Aorta (tissue), 5 donors: ENCODE measurements at regions of chr13 and their contacts with region 1.

Region 1: DNA sequence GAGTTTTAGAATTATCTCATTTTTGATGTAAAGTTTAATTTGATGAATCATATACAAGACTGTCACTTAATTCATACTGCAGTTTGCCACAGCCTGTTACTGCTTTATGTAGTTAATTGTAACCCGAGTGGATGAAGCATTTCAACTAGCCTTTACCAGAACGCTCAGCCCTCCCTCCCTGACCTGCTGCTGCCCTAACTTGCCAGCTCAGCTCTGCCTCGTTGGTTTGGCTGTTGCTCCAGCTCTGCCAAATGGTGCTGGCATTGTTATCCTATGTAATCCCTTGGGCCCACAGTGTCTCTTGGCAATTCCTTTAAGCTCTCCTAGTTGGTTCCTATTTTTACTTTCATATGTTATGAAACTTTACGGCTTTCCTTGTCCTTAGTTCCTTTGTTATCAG is 113.3 kb downstream of the LMO7 start:
- DNase-seq: peak; percentile 80 to 82
- ATAC-seq: peak; percentile 81
- H3K4me3 ChIP-seq: no peak overlapping the region
- H3K27ac ChIP-seq: peak overlapping the region in 1 of 2 donors; percentile 14
- H3K4me1 ChIP-seq: peaks cover 0 to 2% of the 10 kb centered on the region in 2 donors
- H3K27me3 ChIP-seq: no peaks in the 10 kb centered on the region

Region 2: GRCh38 chr13:75258159-75258782 is 491.1 kb before region 1 on chr13:
- intact Hi-C with region 1: no loop called
- DNase-seq: no peak
- ATAC-seq: peak; percentile 57
- H3K4me3 ChIP-seq: no peak overlapping the region
- H3K27ac ChIP-seq: no peak overlapping the region
- H3K4me1 ChIP-seq: no peaks in the 10 kb centered on the region
- H3K27me3 ChIP-seq: no peaks in the 10 kb centered on the region

Region 3: DNA sequence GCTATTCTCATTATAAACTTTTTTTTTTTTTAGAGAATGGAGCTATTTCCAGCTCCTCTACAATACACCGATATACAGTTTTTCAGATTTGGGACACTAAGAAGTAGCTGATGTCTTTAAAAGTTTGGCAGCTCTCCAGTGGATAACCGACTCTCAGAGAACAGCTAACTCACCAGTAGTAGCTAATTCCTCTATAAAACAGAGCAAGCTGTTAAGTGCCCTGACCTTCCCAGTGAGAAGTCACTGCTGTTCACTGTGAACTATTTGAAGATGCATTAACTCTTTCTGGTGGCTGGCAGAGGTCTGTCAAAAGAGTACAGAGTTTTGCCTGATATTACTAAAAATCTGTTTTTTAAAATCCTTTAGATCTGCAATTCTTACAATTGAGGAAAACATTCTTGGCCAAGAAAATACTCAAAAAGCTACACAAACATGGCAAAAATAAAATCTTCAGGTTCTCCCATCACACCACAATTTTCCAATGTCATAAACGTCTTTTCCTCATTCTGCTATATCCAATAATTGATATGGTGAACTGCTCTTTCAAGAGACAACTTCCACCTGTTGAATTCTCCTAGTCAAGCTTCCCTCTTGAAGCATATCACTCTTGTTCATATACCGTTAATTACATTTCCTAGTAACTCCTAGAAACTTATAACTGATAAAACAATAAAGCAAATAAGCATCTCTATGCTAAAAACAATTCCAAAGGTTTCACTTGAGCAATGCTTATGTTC is 311.7 kb before region 1 on chr13:
- intact Hi-C with region 1: no loop called
- DNase-seq: no peak
- ATAC-seq: no peak
- H3K4me3 ChIP-seq: no peak overlapping the region
- H3K27ac ChIP-seq: no peak overlapping the region
- H3K4me1 ChIP-seq: no peaks in the 10 kb centered on the region
- H3K27me3 ChIP-seq: no peaks in the 10 kb centered on the region

Region 4: GRCh38 chr13:75704579-75705320 is 44.7 kb before region 1 on chr13:
- intact Hi-C with region 1: loop called (anchors 5 kb)
- DNase-seq: no peak
- ATAC-seq: peak; percentile 48
- H3K4me3 ChIP-seq: peak overlapping the region in 1 of 2 donors; percentile 10
- H3K27ac ChIP-seq: peak overlapping the region in 1 of 2 donors; percentile 83
- H3K4me1 ChIP-seq: peaks cover 2 to 8% of the 10 kb centered on the region in 2 donors
- H3K27me3 ChIP-seq: no peaks in the 10 kb centered on the region